ENCODE measurements at regions of chr2 and their contacts with region 1.

Region 1: GRCh38 chr2:208984742-208985103 is 439.1 kb upstream of the MAP2 start:
- DNase-seq: peak; percentile 15
- H3K27ac ChIP-seq: no peak overlapping the region
- CTCF ChIP-seq: no peak

Region 2: GRCh38 chr2:209277444-209277843 is 292.7 kb after region 1 on chr2:
- CTCF ChIA-PET with region 1: no interaction called
- POLR2A ChIA-PET with region 1: no interaction called
- DNase-seq: no peak
- H3K27ac ChIP-seq: no peak overlapping the region
- CTCF ChIP-seq: no peak

Region 3: GRCh38 chr2:210189452-210190143 is 1204.9 kb after region 1 on chr2:
- CTCF ChIA-PET with region 1: interaction called, 10 read pairs
- POLR2A ChIA-PET with region 1: no interaction called
- DNase-seq: no peak
- H3K27ac ChIP-seq: no peak overlapping the region
- CTCF ChIP-seq: no peak